ENCODE measurements at regions of chr5 and their contacts with region 1.

Region 1: DNA sequence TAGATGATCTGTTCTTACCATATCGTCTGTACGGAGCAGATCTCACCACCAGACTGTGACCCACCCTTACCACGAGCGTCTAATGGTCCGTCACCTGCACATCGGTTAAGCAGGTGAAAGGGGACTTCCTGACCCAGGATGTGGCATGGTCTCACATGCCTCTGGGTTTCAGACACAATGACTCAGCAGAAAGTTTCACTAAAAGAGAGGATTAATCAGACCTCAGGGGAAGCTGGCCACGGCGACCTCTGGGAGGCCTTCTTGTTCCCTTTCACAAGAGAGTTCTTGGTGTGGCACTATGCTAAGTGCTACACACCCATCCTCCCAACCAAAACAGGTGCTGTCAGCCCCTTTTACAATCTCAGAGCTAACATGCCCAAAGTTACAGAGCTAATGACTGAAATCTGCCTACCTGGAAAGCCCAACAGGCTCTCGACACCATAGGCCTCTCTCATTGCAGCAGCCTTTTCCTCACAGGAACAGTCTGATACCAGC is 41.6 kb downstream of the ADAMTS12 start:
- DNase-seq: peak; percentile 99
- ATAC-seq: peak; percentile 96
- H3K4me3 ChIP-seq: 0 out of 2 replicates have a peak overlapping the region, but pooled peaks have one; percentile 5
- H3K27ac ChIP-seq: peak overlapping the region; percentile 97
- H3K4me1 ChIP-seq: peaks cover 72% of the 10 kb centered on the region
- H3K27me3 ChIP-seq: no peaks in the 10 kb centered on the region
- CTCF ChIP-seq: peak in 1 of 3 experiments; percentile 23; a peak in 1 of 6 replicates
- EP300 ChIP-seq: peak; percentile 99
- POLR2A ChIP-seq: no peak
- RAD21 ChIP-seq: peak; percentile 54

Region 2: DNA sequence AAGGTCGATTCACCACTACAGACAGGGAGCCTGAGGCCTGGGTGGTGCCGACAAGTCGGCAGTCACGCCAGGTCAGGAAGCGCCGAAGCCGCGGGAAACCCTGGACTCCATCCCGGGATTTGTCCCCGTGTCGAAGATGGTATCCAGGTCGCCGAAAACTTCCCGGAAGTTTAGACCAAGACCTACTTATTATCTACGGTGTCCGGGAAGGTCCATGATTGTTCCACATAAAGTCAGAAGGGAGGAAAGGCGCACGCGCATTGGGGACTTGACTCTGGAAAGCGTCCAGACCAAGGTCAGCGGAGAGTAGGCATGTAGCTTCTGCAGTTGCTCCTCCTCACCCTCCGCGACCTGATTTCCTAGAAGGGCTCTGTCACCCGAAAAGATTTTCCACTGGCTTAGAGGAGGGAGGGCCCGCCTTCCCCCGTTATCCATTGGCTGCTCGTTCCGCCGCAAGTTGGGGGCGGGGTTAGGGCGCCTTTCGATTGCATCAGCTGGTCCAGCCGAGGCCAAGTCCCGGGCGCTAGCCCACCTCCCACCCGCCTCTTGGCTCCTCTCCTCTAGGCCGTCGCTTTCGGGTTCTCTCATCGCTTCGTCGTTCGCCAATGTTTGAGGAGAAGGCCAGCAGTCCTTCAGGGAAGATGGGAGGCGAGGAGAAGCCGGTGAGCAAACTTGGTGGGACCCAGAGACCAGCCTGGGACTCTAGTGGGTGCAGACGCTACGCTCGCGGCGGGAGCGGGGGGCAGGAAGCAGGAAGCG is 409.5 kb before region 1 on chr5 and contains the start of gene TARS1:
- CTCF ChIA-PET with region 1: interaction called, 3 read pairs
- POLR2A ChIA-PET with region 1: no interaction called
- RAD21 ChIA-PET with region 1: interaction called, 9 read pairs
- SMC1A ChIA-PET with region 1: no interaction called
- in situ Hi-C with region 1: no loop called
- intact Hi-C with region 1: loop called (anchors 2 kb)
- DNase-seq: peak; percentile 100
- ATAC-seq: peak; percentile 94
- H3K4me3 ChIP-seq: peak within 1 kb of the TSS; percentile 96
- H3K27ac ChIP-seq: peak within 1 kb of the TSS; percentile 92
- H3K4me1 ChIP-seq: no peaks in the 10 kb centered on the region
- H3K27me3 ChIP-seq: no peaks in the 10 kb centered on the region
- CTCF ChIP-seq: no peak
- EP300 ChIP-seq: 0 out of 4 replicates have a peak, but pooled peaks of 1 of the 2 experiments have one; percentile 21
- POLR2A ChIP-seq: peak; percentile 95
- RAD21 ChIP-seq: no peak
- polyA plus RNA-seq, gene TARS1: 163 to 244 TPM

Region 3: GRCh38 chr5:33588654-33589372 is 261.3 kb before region 1 on chr5:
- CTCF ChIA-PET with region 1: no interaction called
- POLR2A ChIA-PET with region 1: no interaction called
- RAD21 ChIA-PET with region 1: interaction called, 4 read pairs
- SMC1A ChIA-PET with region 1: interaction called, 8 read pairs
- in situ Hi-C with region 1: no loop called
- intact Hi-C with region 1: loop called (anchors 5 kb)
- DNase-seq: no peak
- ATAC-seq: peak; percentile 83
- H3K4me3 ChIP-seq: no peak overlapping the region
- H3K27ac ChIP-seq: no peak overlapping the region
- H3K4me1 ChIP-seq: no peaks in the 10 kb centered on the region
- H3K27me3 ChIP-seq: no peaks in the 10 kb centered on the region
- CTCF ChIP-seq: peak; percentile 35 to 59 (median 53)
- EP300 ChIP-seq: no peak
- POLR2A ChIP-seq: no peak
- RAD21 ChIP-seq: peak; percentile 55

Region 4: GRCh38 chr5:33631786-33632185 is 218.4 kb before region 1 on chr5:
- CTCF ChIA-PET with region 1: no interaction called
- POLR2A ChIA-PET with region 1: no interaction called
- RAD21 ChIA-PET with region 1: no interaction called
- SMC1A ChIA-PET with region 1: interaction called, 4 read pairs
- in situ Hi-C with region 1: no loop called
- intact Hi-C with region 1: loop called (anchors 5 kb)
- DNase-seq: peak; percentile 76
- ATAC-seq: peak; percentile 100
- H3K4me3 ChIP-seq: no peak overlapping the region
- H3K27ac ChIP-seq: no peak overlapping the region
- H3K4me1 ChIP-seq: peaks cover 10% of the 10 kb centered on the region; the same call in 1 of the 2 replicates
- H3K27me3 ChIP-seq: no peaks in the 10 kb centered on the region
- CTCF ChIP-seq: no peak
- EP300 ChIP-seq: no peak; a peak in 1 of 4 replicates
- POLR2A ChIP-seq: no peak
- RAD21 ChIP-seq: 0 out of 2 replicates have a peak, but pooled peaks have one; percentile 18

Region 5: DNA sequence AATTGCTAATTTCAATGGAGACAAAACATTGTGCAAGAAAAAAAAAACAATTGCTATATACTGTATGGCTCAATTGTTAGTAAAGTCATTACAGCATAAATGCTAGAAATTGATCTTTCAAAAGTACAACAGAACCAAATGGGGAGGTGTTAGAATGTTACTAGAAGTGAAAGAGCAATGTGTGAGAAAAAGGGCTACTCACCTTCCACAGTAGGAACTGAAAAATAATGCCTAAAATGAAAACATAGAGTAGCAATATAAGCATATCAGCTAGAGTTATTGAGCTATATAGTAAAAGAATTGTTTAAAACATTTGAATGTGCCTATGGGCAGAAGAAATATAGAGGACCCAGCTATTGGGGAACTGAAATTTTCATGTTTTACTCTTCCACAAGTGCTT is 75.1 kb after region 1 on chr5:
- CTCF ChIA-PET with region 1: interaction called, 4 read pairs
- POLR2A ChIA-PET with region 1: interaction called, 3 read pairs
- RAD21 ChIA-PET with region 1: interaction called, 111 read pairs
- SMC1A ChIA-PET with region 1: interaction called, 80 read pairs
- in situ Hi-C with region 1: no loop called
- intact Hi-C with region 1: no loop called
- DNase-seq: no peak
- ATAC-seq: peak; percentile 80
- H3K4me3 ChIP-seq: no peak overlapping the region
- H3K27ac ChIP-seq: peak overlapping the region; percentile 51; the same call in 1 of the 2 replicates
- H3K4me1 ChIP-seq: peaks cover 19% of the 10 kb centered on the region
- H3K27me3 ChIP-seq: no peaks in the 10 kb centered on the region
- CTCF ChIP-seq: no peak
- EP300 ChIP-seq: 0 out of 4 replicates have a peak, but pooled peaks of 1 of the 2 experiments have one; percentile 30
- POLR2A ChIP-seq: no peak
- RAD21 ChIP-seq: no peak